Activated CD4-positive, alpha-beta T cell treated with anti-CD3 and anti-CD28 coated beads, Interleukin-2, amount 10 ng/mL, durations not matched to agents 24 days and 14 days (primary cell): ENCODE measurements at regions of chr3 and their contacts with region 1.

Region 1: GRCh38 chr3:39107388-39108199 is at the starts of genes GORASP1 and TTC21A:
- DNase-seq: peak; percentile 91
- H3K4me3 Mint-ChIP-seq: peak within 1 kb of the TSS; percentile 92
- H3K27ac Mint-ChIP-seq: peak within 1 kb of the TSS; percentile 89
- H3K4me1 Mint-ChIP-seq: peaks cover 49% of the 10 kb centered on the region
- H3K27me3 Mint-ChIP-seq: no peaks in the 10 kb centered on the region
- total RNA-seq, gene GORASP1: 31.5 and 32.1 TPM in 2 replicates
- total RNA-seq, gene TTC21A: 0.54 and 0.89 TPM in 2 replicates

Region 2: GRCh38 chr3:39051647-39052561 is 55.7 kb before region 1 on chr3 and contains the starts of genes SCN11A and WDR48:
- intact Hi-C with region 1: loop called (anchors 1 kb)
- DNase-seq: peak; percentile 98
- H3K4me3 Mint-ChIP-seq: peak within 1 kb of the TSS; percentile 92
- H3K27ac Mint-ChIP-seq: peak within 1 kb of the TSS; percentile 96
- H3K4me1 Mint-ChIP-seq: peaks cover 22% of the 10 kb centered on the region
- H3K27me3 Mint-ChIP-seq: peaks cover 2% of the 10 kb centered on the region
- total RNA-seq, gene SCN11A: not detected in 2 replicates
- total RNA-seq, gene WDR48: 35.4 and 40.5 TPM in 2 replicates

Region 3: DNA sequence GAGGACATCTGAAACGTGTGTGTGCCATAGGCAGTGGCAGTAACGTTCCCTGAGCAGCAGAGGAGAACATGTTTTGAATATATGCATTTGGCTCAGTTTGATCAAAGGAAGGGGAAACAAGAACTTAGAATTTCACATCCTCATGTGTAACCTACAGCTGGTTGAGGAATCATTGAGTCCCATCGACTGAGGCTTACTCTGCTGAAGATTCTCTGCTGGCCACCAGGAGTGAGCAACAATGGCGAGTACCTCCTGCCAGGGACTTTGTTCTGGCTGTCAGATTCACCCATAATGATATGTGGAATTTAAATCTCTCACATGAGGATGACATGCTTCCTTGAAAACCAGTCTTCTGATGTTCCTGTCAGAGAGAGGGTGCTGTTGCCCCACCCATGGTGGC is 21.4 kb before region 1 on chr3:
- intact Hi-C with region 1: no loop called
- DNase-seq: peak; percentile 50
- H3K4me3 Mint-ChIP-seq: no peak overlapping the region
- H3K27ac Mint-ChIP-seq: no peak overlapping the region
- H3K4me1 Mint-ChIP-seq: peaks cover 15% of the 10 kb centered on the region
- H3K27me3 Mint-ChIP-seq: no peaks in the 10 kb centered on the region

Region 4: GRCh38 chr3:39146984-39147591 is 39.5 kb after region 1 on chr3:
- intact Hi-C with region 1: loop called (anchors 1 kb)
- DNase-seq: peak; percentile 89
- H3K4me3 Mint-ChIP-seq: peak overlapping the region; percentile 96
- H3K27ac Mint-ChIP-seq: peak overlapping the region; percentile 100
- H3K4me1 Mint-ChIP-seq: peaks cover 73% of the 10 kb centered on the region
- H3K27me3 Mint-ChIP-seq: no peaks in the 10 kb centered on the region

Region 5: GRCh38 chr3:39180546-39181346 is 73.2 kb after region 1 on chr3:
- intact Hi-C with region 1: loop called (anchors 2 kb)
- DNase-seq: peak; percentile 97
- H3K4me3 Mint-ChIP-seq: peak overlapping the region; percentile 84
- H3K27ac Mint-ChIP-seq: peak overlapping the region; percentile 69
- H3K4me1 Mint-ChIP-seq: peaks cover 50% of the 10 kb centered on the region
- H3K27me3 Mint-ChIP-seq: no peaks in the 10 kb centered on the region